Posterior vena cava (tissue), 2 donors: ENCODE measurements at regions of chr9 and their contacts with region 1.

Region 1: GRCh38 chr9:70510157-70510770 is 95.8 kb upstream of the KLF9 start:
- DNase-seq: no peak

Region 2: GRCh38 chr9:70535546-70536323 is 25.5 kb after region 1 on chr9:
- intact Hi-C with region 1: loop called in 1 of 2 experiments (anchors 1 kb)
- DNase-seq: no peak